Pancreas (tissue), 10 donors: ENCODE measurements at regions of chr14 and their contacts with region 1.

Region 1: DNA sequence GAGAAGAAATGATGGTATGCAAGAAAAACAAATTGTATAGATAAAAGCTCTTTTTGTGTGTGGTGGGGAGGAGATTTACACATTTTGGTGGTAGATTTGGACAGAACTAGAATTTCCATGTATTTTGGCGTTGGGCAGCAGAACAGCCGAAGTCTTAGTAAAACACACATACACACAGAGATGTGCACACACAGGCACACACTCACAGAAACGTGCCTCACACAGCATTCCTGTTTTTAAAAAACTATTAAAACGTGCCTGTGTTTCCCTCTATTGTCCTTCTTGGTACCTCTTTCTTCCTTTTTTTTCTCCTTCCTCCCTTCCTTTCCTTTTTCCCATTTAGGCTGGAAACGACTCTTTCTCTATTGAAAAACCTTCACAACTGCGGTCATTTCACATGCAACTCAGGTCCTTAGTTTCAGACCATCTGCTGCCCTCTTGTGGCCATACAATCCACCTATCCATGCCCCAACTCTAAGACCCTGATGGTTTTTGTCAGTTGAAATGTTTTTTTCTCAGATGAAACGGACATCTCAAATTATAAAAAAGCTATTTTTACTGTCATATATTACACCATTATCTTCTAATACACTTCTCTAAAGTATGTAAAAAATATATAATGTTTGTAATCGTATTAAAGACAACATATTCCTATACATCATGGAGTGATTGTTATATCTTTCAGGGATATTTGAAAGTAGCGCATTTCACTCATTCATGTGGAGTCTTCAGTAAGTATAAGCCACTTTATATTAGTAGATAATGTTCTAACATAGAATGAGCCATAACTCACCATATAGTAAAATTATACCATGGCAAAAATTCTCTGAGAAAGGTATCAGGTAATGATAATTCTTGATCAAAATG is 386.7 kb upstream of the NOVA1 start:
- DNase-seq: peak in 5 of 6 donors; percentile 34 to 61 (median 49)
- ATAC-seq: peak; percentile 69 to 88 (median 82)
- H3K4me3 ChIP-seq: no peak overlapping the region
- H3K27ac ChIP-seq: no peak overlapping the region
- H3K4me1 ChIP-seq: no peaks in the 10 kb centered on the region
- H3K27me3 ChIP-seq: no peaks in the 10 kb centered on the region
- CTCF ChIP-seq: peak; percentile 49 to 67 (median 57)

Region 2: GRCh38 chr14:26394150-26394810 is 590.3 kb before region 1 on chr14:
- intact Hi-C with region 1: loop called in 1 of 3 experiments (anchors 10 kb)
- DNase-seq: peak in 1 of 6 donors; percentile 22
- ATAC-seq: peak in 3 of 4 donors; percentile 52 to 66 (median 56)
- H3K4me3 ChIP-seq: no peak overlapping the region
- H3K27ac ChIP-seq: no peak overlapping the region
- H3K4me1 ChIP-seq: no peaks in the 10 kb centered on the region
- H3K27me3 ChIP-seq: no peaks in the 10 kb centered on the region
- CTCF ChIP-seq: no peak